H1 (cell line): ENCODE measurements at regions of chr10 and their contacts with region 1.

Region 1: DNA sequence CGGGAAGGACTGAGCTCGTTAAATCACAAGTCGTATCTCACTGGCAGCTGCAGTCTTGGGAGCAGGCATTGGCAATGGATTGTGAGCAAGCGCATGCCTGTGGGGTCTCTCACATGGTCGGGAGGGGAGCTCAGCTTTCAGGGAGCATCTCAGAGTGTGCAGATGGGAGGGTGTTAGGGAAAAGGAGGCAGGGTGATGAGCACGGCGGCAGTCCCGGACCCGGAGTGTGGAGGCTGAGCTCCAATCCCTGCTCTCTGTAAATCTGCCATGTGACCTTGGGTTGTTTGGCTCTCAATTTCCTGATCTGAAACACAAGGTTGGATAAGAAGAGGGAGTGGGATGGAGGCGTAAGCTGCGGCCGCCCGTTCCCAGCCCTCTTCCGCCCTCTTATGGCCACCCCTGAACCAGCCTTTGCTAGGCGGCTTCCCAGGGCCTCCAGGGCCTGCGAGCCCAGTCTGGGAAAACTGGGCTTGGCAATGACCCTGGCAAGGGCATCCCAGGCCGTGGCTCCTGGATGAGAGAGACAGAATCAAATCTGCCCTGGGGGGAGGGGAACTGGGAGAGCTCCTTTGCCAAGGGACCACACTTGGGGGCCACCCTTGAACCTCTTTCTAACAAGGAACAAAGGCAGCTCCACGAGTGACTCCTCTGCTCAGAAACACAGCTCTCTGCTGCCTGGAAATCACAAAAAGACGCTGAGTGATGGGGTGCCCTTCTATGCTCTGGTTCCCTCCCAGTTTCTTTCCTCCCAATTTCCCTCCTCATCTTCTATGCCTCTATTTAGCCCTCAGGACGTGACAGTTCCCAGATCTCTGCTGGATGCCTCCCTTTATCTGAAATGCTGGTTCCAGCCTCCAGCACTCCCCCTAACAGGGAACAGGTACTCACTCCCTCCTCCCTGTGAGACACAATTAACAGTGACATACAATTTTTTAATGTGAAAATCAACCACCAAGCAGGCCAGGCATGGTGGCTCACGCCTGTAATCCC is 41.7 kb upstream of the LOXL4 start:
- DNase-seq: peak; percentile 58 to 86
- H3K4me3 ChIP-seq: peak overlapping the region in 3 of 4 experiments; percentile 13 to 48 (median 36); a peak in 6 of 8 replicates
- H3K27ac ChIP-seq: no peak overlapping the region
- H3K4me1 ChIP-seq: peaks cover 0 to 7% (median 5%) of the 10 kb centered on the region in 4 experiments; a peak in 6 of 7 replicates
- H3K27me3 ChIP-seq: no peaks in the 10 kb centered on the region
- CTCF ChIP-seq: peak; percentile 89 to 94 (median 90)
- EP300 ChIP-seq: no peak
- POLR2A ChIP-seq: no peak
- RAD21 ChIP-seq: peak; percentile 90 to 95

Region 2: GRCh38 chr10:98242823-98243222 is 66.8 kb before region 1 on chr10:
- CTCF ChIA-PET with region 1: interaction called, 44 read pairs
- POLR2A ChIA-PET with region 1: no interaction called
- DNase-seq: no peak
- H3K4me3 ChIP-seq: no peak overlapping the region
- H3K27ac ChIP-seq: no peak overlapping the region
- H3K4me1 ChIP-seq: no peaks in the 10 kb centered on the region
- H3K27me3 ChIP-seq: no peaks in the 10 kb centered on the region
- CTCF ChIP-seq: peak in 2 of 3 experiments; percentile 30 to 50; a peak in 2 of 4 replicates
- EP300 ChIP-seq: no peak
- POLR2A ChIP-seq: no peak
- RAD21 ChIP-seq: peak; percentile 65 to 69

Region 3: DNA sequence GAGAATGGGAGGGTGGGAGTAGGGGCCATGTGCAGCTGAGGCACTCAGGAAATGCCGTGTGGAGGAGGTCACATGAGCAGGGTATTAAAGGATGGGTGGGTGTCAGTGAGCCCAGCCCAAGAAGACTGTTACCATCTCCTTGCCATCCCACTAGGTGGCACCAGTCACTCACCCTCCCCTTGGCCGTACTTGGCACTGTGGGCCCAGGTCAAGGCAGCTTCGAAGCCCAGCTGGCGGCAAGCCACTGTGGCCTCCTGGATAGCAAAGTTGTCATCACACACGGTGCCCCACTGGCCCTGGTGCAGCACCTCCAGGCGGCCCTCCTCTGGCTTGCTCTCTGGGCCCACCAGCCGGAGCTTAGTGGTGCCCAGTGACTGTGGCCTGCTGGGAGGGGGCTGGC is 47.1 kb before region 1 on chr10:
- CTCF ChIA-PET with region 1: interaction called, 117 read pairs
- POLR2A ChIA-PET with region 1: interaction called, 5 read pairs
- DNase-seq: peak in 1 of 2 experiments; percentile 34
- H3K4me3 ChIP-seq: no peak overlapping the region
- H3K27ac ChIP-seq: no peak overlapping the region
- H3K4me1 ChIP-seq: peaks cover 0 to 2% (median 0%) of the 10 kb centered on the region in 4 experiments; a peak in 1 of 7 replicates
- H3K27me3 ChIP-seq: peaks cover 0 to 4% (median 2%) of the 10 kb centered on the region in 4 experiments; a peak in 3 of 7 replicates
- CTCF ChIP-seq: peak; percentile 77 to 81 (median 80)
- EP300 ChIP-seq: no peak
- POLR2A ChIP-seq: no peak
- RAD21 ChIP-seq: peak; percentile 86 to 89

Region 4: GRCh38 chr10:98285416-98285815 is 24.2 kb before region 1 on chr10:
- CTCF ChIA-PET with region 1: interaction called, 34 read pairs
- POLR2A ChIA-PET with region 1: no interaction called
- DNase-seq: no peak
- H3K4me3 ChIP-seq: no peak overlapping the region
- H3K27ac ChIP-seq: no peak overlapping the region
- H3K4me1 ChIP-seq: peaks cover 0 to 5% (median 3%) of the 10 kb centered on the region in 4 experiments; a peak in 4 of 7 replicates
- H3K27me3 ChIP-seq: no peaks in the 10 kb centered on the region
- CTCF ChIP-seq: no peak
- EP300 ChIP-seq: no peak
- POLR2A ChIP-seq: no peak
- RAD21 ChIP-seq: no peak

Region 5: GRCh38 chr10:98323221-98324164 is 13.8 kb after region 1 on chr10:
- CTCF ChIA-PET with region 1: interaction called, 58 read pairs
- POLR2A ChIA-PET with region 1: no interaction called
- DNase-seq: no peak
- H3K4me3 ChIP-seq: no peak overlapping the region
- H3K27ac ChIP-seq: no peak overlapping the region
- H3K4me1 ChIP-seq: peaks cover 0 to 3% (median 0%) of the 10 kb centered on the region in 4 experiments; a peak in 3 of 7 replicates
- H3K27me3 ChIP-seq: no peaks in the 10 kb centered on the region
- CTCF ChIP-seq: no peak
- EP300 ChIP-seq: no peak
- POLR2A ChIP-seq: no peak
- RAD21 ChIP-seq: no peak

Region 6: DNA sequence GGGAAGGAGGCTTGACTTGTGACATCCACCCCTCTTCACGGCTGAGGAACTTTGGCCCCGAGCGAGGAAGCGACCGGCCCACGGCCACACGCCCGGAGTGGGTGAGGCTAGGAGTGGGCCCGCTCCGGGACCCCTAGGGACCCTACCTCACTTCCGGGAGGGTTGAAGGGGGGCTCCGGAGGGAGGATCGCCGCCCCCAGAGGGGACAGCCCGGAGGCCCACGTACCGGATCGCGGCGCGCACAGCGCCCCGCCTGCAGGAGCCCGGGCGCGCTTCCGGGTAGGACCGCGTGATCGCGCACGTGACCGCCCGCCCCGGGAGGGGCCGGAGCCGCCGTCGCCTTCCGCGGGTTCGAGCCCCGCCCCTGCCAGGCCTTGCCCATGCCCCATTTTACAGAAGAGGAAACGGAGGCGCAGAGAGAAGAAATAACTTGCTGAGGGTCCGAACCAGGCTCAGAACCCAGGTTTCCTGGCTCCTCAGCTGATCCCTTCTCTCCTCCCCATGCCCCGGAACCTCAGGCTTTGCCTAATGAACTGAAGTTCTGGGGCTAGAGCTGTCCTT is 137.1 kb after region 1 on chr10 and contains the start of gene HPS1:
- CTCF ChIA-PET with region 1: interaction called, 10 read pairs
- POLR2A ChIA-PET with region 1: no interaction called
- DNase-seq: peak in 1 of 2 experiments; percentile 86
- H3K4me3 ChIP-seq: peak within 1 kb of the TSS; percentile 70 to 93 (median 76)
- H3K27ac ChIP-seq: peak within 1 kb of the TSS; percentile 69; the same call in 1 of the 2 replicates
- H3K4me1 ChIP-seq: peaks cover 0 to 4% (median 3%) of the 10 kb centered on the region in 4 experiments; a peak in 5 of 7 replicates
- H3K27me3 ChIP-seq: no peaks in the 10 kb centered on the region
- CTCF ChIP-seq: no peak
- EP300 ChIP-seq: no peak
- POLR2A ChIP-seq: peak in 1 of 2 experiments; percentile 75; a peak in 2 of 3 replicates
- RAD21 ChIP-seq: no peak
- total RNA-seq, gene HPS1: 38.7 and 44.0 TPM in 2 replicates